Activated B cell treated with CpG ODN at 0.5 μM for 24 hours (primary cell): ENCODE measurements at regions of chr12 and their contacts with region 1.

Region 1: GRCh38 chr12:64840119-64840518 is 15.7 kb downstream of the TBC1D30 start:
- DNase-seq: no peak
- ATAC-seq: no peak
- H3K4me3 Mint-ChIP-seq: no peak overlapping the region
- H3K27ac Mint-ChIP-seq: no peak overlapping the region
- H3K4me1 Mint-ChIP-seq: no peaks in the 10 kb centered on the region
- H3K27me3 Mint-ChIP-seq: peaks cover 4% of the 10 kb centered on the region
- CTCF ChIP-seq: no peak

Region 2: DNA sequence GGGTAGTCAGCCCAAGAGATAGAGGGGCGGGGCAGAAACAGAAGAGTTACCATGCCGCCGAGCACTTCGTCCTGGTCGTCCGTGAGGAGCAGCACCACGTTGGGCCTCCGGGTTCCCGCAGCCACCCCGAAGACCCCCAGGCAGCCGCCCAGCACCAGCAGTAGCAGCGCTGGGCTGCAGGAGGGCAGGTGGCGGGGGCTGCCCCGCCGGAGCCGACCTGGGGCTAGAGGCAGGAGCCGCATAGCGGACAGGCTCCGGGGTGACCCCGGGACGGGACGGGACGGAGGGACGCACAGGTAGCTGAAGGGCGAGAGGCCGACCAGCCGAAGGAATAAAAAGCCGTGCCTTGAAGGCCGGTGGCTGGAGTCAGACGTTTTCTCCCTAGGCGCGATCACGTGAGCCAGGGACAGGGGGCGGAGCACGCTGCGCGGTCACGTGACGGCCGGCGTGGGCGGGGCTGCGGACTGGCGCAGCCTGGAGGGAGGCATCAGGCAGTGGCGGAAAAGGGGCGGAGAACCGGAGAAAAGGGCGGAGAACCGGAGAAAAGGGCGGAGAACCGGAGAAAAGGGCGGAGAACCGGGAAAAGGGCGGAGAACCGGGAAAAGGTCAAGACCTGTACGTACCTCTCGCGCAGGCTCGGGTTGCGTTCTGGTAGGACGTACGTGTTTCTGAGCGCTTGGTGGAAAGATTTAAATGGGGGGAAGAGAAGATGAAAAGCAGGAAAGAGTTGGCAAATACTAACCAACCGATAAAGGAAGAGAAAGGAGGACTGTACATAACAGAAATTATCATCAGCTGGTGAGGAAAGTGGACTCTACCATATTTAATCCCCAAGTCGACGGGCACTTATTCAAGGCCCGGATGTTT is 80.9 kb before region 1 on chr12 and contains the start of gene GNS:
- CTCF ChIA-PET with region 1: no interaction called
- POLR2A ChIA-PET with region 1: no interaction called
- intact Hi-C with region 1: no loop called
- DNase-seq: peak; percentile 98
- ATAC-seq: peak; percentile 93
- H3K4me3 Mint-ChIP-seq: peak within 1 kb of the TSS; percentile 92
- H3K27ac Mint-ChIP-seq: peak within 1 kb of the TSS; percentile 83
- H3K4me1 Mint-ChIP-seq: peaks cover 41% of the 10 kb centered on the region
- H3K27me3 Mint-ChIP-seq: no peaks in the 10 kb centered on the region
- CTCF ChIP-seq: no peak
- total RNA-seq, gene GNS: 16.3 and 17.7 TPM in 2 replicates

Region 3: GRCh38 chr12:64806593-64807460 is 33.3 kb before region 1 on chr12:
- CTCF ChIA-PET with region 1: interaction called, 3 read pairs
- POLR2A ChIA-PET with region 1: interaction called, 11 read pairs
- intact Hi-C with region 1: no loop called
- DNase-seq: no peak
- ATAC-seq: no peak
- H3K4me3 Mint-ChIP-seq: no peak overlapping the region
- H3K27ac Mint-ChIP-seq: no peak overlapping the region
- H3K4me1 Mint-ChIP-seq: no peaks in the 10 kb centered on the region
- H3K27me3 Mint-ChIP-seq: peaks cover 35% of the 10 kb centered on the region
- CTCF ChIP-seq: no peak